ENCODE measurements at regions of chr7 and their contacts with region 1.

Region 1: GRCh38 chr7:104431930-104432329 is 103.5 kb downstream of the LHFPL3 start:
- DNase-seq: no peak
- H3K4me3 ChIP-seq: no peak overlapping the region
- H3K27ac ChIP-seq: no peak overlapping the region
- H3K4me1 ChIP-seq: no peaks in the 10 kb centered on the region
- H3K27me3 ChIP-seq: no peaks in the 10 kb centered on the region
- CTCF ChIP-seq: peak; percentile 24 to 46 (median 33); a peak in 3 of 4 replicates
- EP300 ChIP-seq: no peak
- POLR2A ChIP-seq: no peak
- RAD21 ChIP-seq: peak; percentile 33 to 45

Region 2: DNA sequence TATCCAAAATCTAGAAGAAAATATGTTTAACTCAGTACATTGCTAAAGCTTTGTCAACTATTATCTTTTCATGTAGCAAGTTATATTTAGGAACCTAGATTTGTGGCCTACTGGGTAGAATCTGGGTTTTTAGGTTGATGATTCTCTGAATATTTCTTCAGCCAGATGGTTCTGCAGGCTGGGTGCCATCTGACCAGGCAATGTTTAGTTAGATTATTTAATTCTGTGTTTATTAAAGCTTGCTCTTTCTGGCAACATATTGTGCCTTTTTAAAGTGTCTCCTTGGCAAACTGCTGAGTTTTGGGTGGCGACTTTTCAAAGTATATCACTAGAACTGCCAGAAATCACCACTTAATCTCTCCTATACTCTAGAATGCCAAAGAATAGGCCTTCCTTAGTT is 10.6 kb after region 1 on chr7:
- CTCF ChIA-PET with region 1: interaction called, 10 read pairs
- POLR2A ChIA-PET with region 1: no interaction called
- DNase-seq: no peak
- H3K4me3 ChIP-seq: no peak overlapping the region
- H3K27ac ChIP-seq: no peak overlapping the region
- H3K4me1 ChIP-seq: no peaks in the 10 kb centered on the region
- H3K27me3 ChIP-seq: no peaks in the 10 kb centered on the region
- CTCF ChIP-seq: no peak
- EP300 ChIP-seq: no peak
- POLR2A ChIP-seq: no peak
- RAD21 ChIP-seq: no peak

Region 3: DNA sequence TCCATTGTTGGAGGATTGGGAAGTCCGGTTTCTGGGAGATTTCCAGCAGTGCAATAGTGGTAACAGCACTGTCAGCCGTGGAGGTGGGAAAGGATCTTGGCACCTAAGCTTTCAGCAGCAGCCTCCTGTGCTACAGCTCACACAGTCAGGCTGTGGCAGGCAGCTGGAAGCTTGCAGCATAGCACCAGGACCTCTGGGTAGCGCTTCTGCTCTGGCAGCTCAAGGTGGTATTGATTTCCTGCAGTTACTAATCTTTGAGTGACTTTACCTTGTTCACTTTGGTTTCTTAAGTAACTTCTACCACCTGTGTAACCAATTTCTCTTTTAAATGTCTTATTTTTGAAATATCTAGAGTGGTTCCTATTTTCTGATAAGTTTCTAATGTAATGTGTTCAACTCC is 26.9 kb after region 1 on chr7:
- CTCF ChIA-PET with region 1: no interaction called
- POLR2A ChIA-PET with region 1: no interaction called
- DNase-seq: no peak
- H3K4me3 ChIP-seq: no peak overlapping the region
- H3K27ac ChIP-seq: no peak overlapping the region
- H3K4me1 ChIP-seq: no peaks in the 10 kb centered on the region
- H3K27me3 ChIP-seq: peaks cover 0 to 4% (median 0%) of the 10 kb centered on the region in 4 experiments; a peak in 1 of 7 replicates
- CTCF ChIP-seq: no peak
- EP300 ChIP-seq: no peak
- POLR2A ChIP-seq: no peak
- RAD21 ChIP-seq: no peak

Measured in H1 (cell line).